ENCODE measurements at regions of chr1 and their contacts with region 1.

Region 1: DNA sequence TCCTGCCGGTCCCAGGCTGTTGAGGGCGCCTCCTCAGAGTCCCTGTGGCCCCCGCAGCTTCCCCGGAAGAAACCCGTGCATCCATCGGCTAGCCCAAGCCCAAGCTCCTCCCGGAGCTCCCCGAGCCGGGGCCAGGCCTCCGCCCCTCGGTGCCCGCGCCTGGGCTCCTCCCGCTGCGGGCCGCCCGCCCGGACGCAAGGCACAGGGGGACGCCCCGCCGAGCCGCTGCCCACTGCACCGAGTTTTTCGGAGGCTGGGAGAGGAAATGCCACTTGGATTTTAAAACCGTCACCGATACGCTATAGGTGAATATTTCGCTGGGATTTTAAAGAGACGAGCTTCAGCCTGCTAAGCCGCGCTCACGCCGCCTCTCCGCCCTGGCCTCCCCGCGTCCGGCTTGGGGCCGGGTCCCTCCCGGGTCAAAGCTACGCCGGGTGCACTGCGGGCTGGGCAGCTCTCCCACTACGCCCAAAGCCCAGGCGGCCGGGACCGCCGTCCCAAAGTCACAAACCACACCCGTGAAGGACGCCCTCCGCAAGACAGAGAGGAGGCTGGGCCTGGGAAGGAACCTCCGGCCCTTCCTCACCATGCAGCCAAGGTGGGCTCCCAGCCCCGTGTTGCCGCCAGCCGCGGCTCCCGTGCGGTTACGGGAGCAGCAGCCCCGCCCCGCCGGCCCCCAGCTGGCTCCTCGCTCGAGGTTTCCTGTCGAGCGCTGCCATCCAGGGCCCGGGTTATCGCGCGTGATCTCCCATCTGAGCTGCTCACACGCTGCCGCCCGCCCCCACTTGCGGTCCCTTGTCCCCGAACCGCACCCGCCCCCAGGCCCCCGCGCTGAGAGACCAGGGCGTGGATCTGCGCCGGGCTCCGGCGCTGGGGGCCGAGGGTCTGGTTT is 63.2 kb downstream of the CD247 start:
- DNase-seq: peak; percentile 72 to 89 (median 80)
- ATAC-seq: peak; percentile 70 to 77
- H3K4me3 Mint-ChIP-seq: peak overlapping the region; percentile 66 to 91 (median 84)
- H3K27ac Mint-ChIP-seq: peak overlapping the region; percentile 53 to 97 (median 94)
- H3K4me1 Mint-ChIP-seq: peaks cover 39 to 74% (median 70%) of the 10 kb centered on the region in 4 donors
- H3K27me3 Mint-ChIP-seq: no peaks in the 10 kb centered on the region

Region 2: DNA sequence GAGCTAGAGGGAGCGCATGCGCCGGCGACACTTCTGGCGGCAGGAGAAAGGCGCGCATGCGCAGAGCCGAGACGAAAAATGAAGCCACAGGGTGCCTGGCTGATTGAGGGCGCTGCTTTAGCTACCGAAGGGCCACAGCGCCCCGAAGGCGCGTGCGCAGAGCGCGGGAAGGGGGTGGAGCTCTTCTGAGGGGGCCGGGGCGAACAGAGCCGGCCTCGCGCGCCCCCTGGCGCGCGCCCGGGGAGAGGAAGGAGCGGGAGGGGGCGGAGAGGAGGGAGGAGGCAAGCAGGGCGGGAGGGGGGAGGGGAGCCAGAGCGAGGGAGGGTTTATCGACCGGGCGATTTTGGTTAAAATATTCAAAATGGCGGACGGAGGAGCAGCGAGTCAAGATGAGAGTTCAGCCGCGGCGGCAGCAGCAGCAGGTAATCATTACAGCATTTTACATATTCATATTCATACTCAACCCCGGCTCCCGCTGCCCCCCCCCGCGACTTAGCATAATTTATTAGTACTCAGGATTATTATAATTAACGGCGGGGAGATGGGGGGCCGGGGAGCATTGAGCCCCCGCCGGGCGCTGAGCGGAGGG is 234.5 kb before region 1 on chr1 and contains the start of gene POU2F1:
- POLR2A ChIA-PET with region 1: no interaction called
- DNase-seq: peak in 9 of 10 donors; percentile 97 to 100 (median 99)
- ATAC-seq: peak; percentile 72 to 82
- H3K4me3 Mint-ChIP-seq: peak within 1 kb of the TSS; percentile 92 to 98 (median 95)
- H3K27ac Mint-ChIP-seq: peak within 1 kb of the TSS; percentile 91 to 99 (median 98)
- H3K4me1 Mint-ChIP-seq: peaks cover 17 to 44% (median 35%) of the 10 kb centered on the region in 4 donors
- H3K27me3 Mint-ChIP-seq: peaks cover 0 to 3% (median 0%) of the 10 kb centered on the region in 5 donors
- polyA plus RNA-seq, gene POU2F1: 5.0 to 9.8 (median 8.1) TPM

Region 3: GRCh38 chr1:167442124-167442848 is 12.9 kb before region 1 on chr1:
- POLR2A ChIA-PET with region 1: interaction called, 41 read pairs
- DNase-seq: peak; percentile 74 to 89 (median 82)
- ATAC-seq: peak; percentile 70 to 88
- H3K4me3 Mint-ChIP-seq: peak overlapping the region in 7 of 10 donors; percentile 22 to 78 (median 64)
- H3K27ac Mint-ChIP-seq: peak overlapping the region; percentile 49 to 96 (median 90)
- H3K4me1 Mint-ChIP-seq: peaks cover 52 to 97% (median 90%) of the 10 kb centered on the region in 4 donors
- H3K27me3 Mint-ChIP-seq: no peaks in the 10 kb centered on the region

Region 4: DNA sequence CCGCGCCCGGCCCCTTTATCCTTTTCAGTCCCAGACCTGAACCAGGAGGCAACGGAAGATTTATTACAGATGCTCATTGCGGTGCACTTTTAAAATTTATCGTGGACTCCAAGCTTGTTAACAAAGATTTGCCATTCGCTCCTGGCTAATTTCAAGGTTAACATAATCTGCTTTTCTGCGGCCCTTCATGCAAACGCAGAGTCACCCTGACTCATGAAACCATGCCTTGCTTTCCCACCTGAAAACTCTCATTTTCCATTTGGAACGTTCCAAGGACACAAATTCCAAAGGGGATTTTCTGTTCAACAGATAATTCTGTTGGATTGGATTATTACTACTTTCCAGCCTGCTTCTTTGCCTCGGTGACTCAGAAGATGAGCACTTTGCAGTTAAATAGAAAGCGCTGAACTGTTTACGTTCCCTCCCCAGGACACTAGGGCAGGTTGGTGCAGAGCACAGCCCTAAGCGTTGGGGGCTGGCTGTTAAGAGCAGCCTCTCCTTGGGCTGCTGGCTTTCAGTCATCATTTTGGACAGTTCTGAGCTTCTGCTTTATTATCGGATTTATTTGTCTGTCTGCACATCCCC is 12.1 kb after region 1 on chr1:
- POLR2A ChIA-PET with region 1: interaction called, 34 read pairs
- DNase-seq: no peak
- ATAC-seq: no peak
- H3K4me3 Mint-ChIP-seq: peak overlapping the region in 2 of 10 donors; percentile 12 to 15
- H3K27ac Mint-ChIP-seq: peak overlapping the region; percentile 4 to 90 (median 78)
- H3K4me1 Mint-ChIP-seq: peaks cover 22 to 87% (median 80%) of the 10 kb centered on the region in 4 donors
- H3K27me3 Mint-ChIP-seq: no peaks in the 10 kb centered on the region

Region 5: GRCh38 chr1:167474191-167474716 is 19.1 kb after region 1 on chr1:
- POLR2A ChIA-PET with region 1: interaction called, 34 read pairs
- DNase-seq: peak in 8 of 10 donors; percentile 37 to 71 (median 58)
- ATAC-seq: peak; percentile 82 to 83
- H3K4me3 Mint-ChIP-seq: peak overlapping the region; percentile 70 to 91 (median 82)
- H3K27ac Mint-ChIP-seq: peak overlapping the region; percentile 70 to 95 (median 88)
- H3K4me1 Mint-ChIP-seq: peaks cover 42 to 92% (median 86%) of the 10 kb centered on the region in 4 donors
- H3K27me3 Mint-ChIP-seq: no peaks in the 10 kb centered on the region

Region 6: DNA sequence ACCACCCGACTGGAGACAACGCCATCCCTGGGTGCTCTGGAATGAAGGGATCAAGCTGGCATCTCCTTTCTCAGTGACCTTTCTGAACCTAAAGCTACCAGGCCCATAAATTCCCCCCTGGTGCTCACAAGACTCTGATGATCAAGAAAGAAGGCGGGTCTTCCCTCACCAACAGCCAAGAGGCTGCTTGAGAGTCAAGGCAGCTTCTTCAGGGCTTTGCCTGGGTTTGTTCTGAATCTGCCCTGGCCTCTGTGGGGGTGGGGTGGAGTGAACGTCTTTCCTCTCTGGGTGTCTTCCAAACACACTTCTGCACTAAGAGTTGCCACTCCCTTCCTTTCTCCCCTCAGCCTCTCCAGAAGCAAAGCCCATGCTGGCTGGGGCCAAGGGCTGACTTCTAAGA is 27.0 kb after region 1 on chr1:
- POLR2A ChIA-PET with region 1: interaction called, 29 read pairs
- DNase-seq: peak in 7 of 10 donors; percentile 25 to 73 (median 46)
- ATAC-seq: peak; percentile 47 to 68
- H3K4me3 Mint-ChIP-seq: peak overlapping the region; percentile 57 to 87 (median 74)
- H3K27ac Mint-ChIP-seq: peak overlapping the region; percentile 65 to 97 (median 94)
- H3K4me1 Mint-ChIP-seq: peaks cover 60 to 100% (median 97%) of the 10 kb centered on the region in 4 donors
- H3K27me3 Mint-ChIP-seq: no peaks in the 10 kb centered on the region

Region 7: DNA sequence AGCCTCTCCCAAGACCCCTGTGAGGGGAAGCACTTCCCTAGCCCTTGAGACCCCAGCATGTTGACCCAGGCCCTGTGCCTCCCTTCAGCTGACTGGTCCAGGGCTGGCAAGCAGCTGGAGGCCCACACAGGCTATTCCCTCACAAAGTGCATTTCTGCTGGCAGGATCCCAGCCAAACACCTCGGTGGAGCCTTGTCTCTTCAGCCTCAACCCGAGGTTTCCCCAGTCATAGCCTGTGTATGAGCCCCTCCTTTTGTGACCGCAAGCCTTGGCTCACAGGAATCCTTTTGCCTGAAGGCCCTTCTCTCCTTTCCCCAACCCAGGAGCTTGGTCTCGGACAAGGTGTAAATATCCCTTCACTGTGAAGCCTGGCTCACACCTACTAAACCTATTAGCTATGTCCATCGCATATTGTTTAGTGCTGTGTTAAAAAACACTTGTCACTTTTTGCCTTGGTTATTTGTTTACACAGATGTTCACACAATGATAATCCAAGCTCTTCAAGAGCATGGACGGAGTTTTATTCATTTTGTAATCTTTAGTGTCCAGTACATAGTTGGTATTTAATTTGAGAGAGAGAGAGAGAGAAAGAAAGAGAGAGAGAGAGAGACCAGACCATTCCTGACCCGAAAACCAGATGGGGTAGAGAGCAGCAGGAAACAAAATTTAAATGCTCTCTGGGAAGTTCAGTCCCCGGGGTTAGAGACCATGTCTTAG is 71.7 kb after region 1 on chr1:
- POLR2A ChIA-PET with region 1: no interaction called
- DNase-seq: no peak
- ATAC-seq: no peak
- H3K4me3 Mint-ChIP-seq: no peak overlapping the region
- H3K27ac Mint-ChIP-seq: no peak overlapping the region
- H3K4me1 Mint-ChIP-seq: peaks cover 0 to 7% (median 6%) of the 10 kb centered on the region in 4 donors
- H3K27me3 Mint-ChIP-seq: no peaks in the 10 kb centered on the region

Measured in naive thymus-derived CD8-positive, alpha-beta T cell (primary cell).